Activated T-helper 2 cell treated with anti-CD3 and anti-CD28 coated beads, Interferon-gamma antibody, Interleukin-2, Interleukin-4, amounts not matched to agents 10 μg/mL and 5 μg/mL and 100 μg/mL, durations not matched to agents 14 hours and 24 hours and 36 hours (primary cell): ENCODE measurements at regions of chr5 and their contacts with region 1.

Region 1: DNA sequence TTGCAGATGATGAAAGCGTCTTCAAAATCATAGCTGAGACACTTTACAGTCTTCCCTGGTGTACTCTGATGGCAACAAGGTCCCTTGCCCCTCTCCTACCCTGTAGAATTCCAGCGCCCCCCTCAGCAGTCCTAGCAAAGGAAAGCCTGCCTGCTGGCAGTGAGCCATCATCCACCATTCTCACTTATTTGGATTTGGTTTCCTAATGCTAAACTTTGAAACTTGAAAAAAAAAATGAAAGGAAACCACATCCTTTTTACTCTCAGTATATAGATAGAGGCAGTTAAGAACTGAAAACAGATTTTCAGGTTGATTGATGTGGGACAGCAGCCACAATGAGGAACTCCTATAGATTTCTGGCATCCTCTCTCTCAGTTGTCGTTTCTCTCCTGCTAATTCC is at the start of gene GZMA:
- DNase-seq: peak; percentile 31
- H3K4me3 Mint-ChIP-seq: peak within 1 kb of the TSS; percentile 79
- H3K27ac Mint-ChIP-seq: peak within 1 kb of the TSS; percentile 88
- H3K4me1 Mint-ChIP-seq: peaks cover 72% of the 10 kb centered on the region
- H3K27me3 Mint-ChIP-seq: no peaks in the 10 kb centered on the region
- total RNA-seq, gene GZMA: 95.1 and 96.9 TPM in 2 replicates

Region 2: DNA sequence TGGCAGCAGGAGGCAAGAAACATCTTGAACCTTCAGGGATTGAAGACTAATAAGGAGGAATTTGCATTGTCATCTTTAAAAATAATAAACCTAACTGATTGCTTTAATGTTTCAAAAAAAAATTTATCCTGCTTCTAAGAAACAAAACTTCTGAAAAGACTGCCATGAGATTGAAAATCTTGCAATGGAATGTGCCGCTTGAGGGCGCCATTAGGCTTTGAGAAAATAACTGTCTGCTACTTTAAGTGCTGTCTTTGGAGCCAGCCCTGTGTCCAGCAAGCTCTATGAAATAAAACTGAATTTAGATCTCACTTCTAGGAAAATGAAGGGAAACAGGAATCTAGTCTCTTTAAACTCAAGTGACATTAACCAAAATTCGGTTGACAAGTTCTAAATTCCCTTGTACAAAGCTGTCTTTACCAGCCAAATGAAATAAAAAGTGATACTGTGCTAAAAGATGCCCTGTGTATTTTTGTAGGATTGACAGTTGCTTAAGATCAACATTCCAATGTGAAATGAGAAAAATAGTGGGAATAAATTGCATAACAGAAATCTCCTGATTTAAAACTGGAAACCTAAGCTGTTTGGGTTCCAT is 196.3 kb before region 1 on chr5:
- intact Hi-C with region 1: loop called (anchors 2 kb)
- DNase-seq: peak; percentile 50
- H3K4me3 Mint-ChIP-seq: no peak overlapping the region
- H3K27ac Mint-ChIP-seq: no peak overlapping the region
- H3K4me1 Mint-ChIP-seq: peaks cover 65% of the 10 kb centered on the region
- H3K27me3 Mint-ChIP-seq: peaks cover 29% of the 10 kb centered on the region

Region 3: DNA sequence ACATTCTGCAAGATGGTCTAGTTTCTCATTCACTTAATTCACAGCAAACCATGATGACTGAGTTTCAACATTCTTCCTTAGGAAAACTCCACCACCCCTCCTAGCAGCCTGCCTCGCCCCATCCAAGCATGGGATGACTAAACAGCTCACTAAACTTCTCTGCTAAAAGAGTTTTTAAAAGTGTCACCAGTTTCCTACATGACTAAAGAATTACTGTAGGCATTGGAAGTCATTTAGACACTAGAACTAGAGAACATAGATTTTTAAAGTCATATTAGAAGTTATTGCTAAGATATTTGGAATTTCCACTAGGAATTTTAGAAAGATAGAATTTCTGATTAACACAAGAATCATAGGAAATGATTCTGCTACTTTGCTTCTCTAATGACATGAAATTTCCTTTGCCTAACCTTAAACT is 111.5 kb before region 1 on chr5:
- intact Hi-C with region 1: loop called (anchors 2 kb)
- DNase-seq: no peak
- H3K4me3 Mint-ChIP-seq: no peak overlapping the region
- H3K27ac Mint-ChIP-seq: no peak overlapping the region
- H3K4me1 Mint-ChIP-seq: peaks cover 70% of the 10 kb centered on the region
- H3K27me3 Mint-ChIP-seq: peaks cover 8% of the 10 kb centered on the region

Region 4: DNA sequence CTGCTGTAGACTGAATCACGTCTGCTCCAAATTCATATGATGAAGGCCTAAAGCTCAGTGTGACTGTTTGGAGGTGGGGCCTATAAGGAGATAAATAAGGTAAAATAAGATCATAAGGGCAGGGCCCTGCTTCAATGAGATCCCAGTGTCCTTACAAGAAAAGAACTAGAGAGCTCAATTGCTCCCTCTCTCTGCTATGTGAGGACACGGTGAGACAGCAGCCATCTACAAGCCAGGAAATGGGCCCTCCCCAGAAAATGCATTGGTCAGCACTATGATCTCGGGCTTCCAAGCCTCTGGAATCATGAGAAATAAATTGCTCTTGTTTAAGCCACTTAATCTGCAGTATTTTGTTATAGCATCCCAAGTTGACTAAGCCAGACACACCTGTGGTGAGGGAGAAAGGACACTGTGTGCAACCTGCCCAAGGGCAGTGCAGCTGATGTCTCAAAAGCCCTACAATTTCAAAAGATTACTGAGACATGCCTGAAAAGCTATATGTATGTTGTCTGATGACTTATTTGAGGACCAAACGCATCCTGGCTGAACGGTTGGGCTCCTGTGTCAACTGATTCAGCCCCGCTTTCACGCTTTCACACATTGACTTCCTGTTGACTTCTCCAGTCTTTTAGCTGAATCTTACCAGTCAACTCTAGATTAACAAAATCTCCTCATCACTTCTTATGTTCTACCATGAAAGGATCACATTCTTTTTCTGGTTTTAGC is 65.1 kb before region 1 on chr5:
- intact Hi-C with region 1: loop called (anchors 1 kb)
- DNase-seq: peak; percentile 69
- H3K4me3 Mint-ChIP-seq: no peak overlapping the region
- H3K27ac Mint-ChIP-seq: peak overlapping the region; percentile 93
- H3K4me1 Mint-ChIP-seq: peaks cover 42% of the 10 kb centered on the region
- H3K27me3 Mint-ChIP-seq: no peaks in the 10 kb centered on the region

Region 5: DNA sequence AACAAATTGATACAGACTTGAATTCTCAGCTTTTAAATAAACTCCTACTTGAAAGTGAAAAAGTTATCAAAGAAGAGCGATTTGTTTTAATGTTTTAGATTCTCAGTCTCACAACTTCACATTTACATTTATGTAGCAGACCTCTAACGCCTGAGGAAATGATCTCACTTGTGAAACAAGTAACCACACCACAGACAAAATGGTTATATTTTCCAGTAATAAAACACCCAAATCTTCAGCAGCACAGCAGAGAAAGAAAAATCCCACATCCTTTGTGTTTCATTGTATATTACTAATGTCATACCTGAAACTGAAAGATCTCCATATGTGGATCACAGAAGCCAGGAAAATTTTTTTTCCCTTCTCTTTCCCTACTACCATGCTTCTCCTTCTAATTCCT is 29.7 kb before region 1 on chr5:
- intact Hi-C with region 1: loop called (anchors 1 kb)
- DNase-seq: no peak
- H3K4me3 Mint-ChIP-seq: peak overlapping the region; percentile 32
- H3K27ac Mint-ChIP-seq: peak overlapping the region; percentile 75
- H3K4me1 Mint-ChIP-seq: peaks cover 46% of the 10 kb centered on the region
- H3K27me3 Mint-ChIP-seq: no peaks in the 10 kb centered on the region

Region 6: DNA sequence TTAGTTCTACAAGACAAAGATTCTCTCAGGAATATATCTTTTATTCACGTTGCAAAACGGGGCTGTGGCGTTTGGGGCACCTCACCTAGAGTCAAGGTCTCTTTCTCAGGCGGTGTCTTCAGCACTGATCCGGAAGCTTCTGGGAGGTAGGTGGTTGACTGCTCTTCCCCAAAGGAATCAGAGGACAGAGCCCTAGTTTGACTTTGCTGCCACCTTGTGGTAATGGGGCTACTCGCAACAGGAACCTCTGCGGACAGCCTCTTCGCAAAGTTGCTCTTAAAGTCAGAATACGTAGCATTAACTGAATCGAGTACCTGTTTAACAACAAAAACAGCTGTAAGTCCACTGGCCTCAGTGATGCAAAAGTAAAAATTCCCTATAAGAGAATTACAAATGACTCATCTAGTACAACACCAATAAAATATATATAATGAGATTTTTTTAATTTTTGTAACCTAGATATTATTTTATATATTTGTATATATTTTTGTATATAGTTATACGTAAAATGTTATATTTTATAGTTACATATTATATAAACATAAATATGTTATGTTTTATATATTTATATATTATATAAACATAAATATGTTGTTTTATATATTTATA is 44.3 kb after region 1 on chr5:
- intact Hi-C with region 1: loop called (anchors 1 kb)
- DNase-seq: peak; percentile 80
- H3K4me3 Mint-ChIP-seq: peak overlapping the region; percentile 23
- H3K27ac Mint-ChIP-seq: no peak overlapping the region
- H3K4me1 Mint-ChIP-seq: peaks cover 46% of the 10 kb centered on the region
- H3K27me3 Mint-ChIP-seq: peaks cover 23% of the 10 kb centered on the region